PC-9 (cell line): ENCODE measurements at regions of chr1 and their contacts with region 1.

Region 1: GRCh38 chr1:92784639-92785500 is at the start of gene EVI5:
- DNase-seq: peak; percentile 94 to 95
- H3K4me3 ChIP-seq: peak within 1 kb of the TSS; percentile 94
- H3K27ac ChIP-seq: peak within 1 kb of the TSS; percentile 57
- H3K4me1 ChIP-seq: peaks cover 26% of the 10 kb centered on the region
- H3K27me3 ChIP-seq: no peaks in the 10 kb centered on the region
- CTCF ChIP-seq: no peak
- total RNA-seq, gene EVI5: 32.0 and 33.9 TPM in 2 replicates

Region 2: DNA sequence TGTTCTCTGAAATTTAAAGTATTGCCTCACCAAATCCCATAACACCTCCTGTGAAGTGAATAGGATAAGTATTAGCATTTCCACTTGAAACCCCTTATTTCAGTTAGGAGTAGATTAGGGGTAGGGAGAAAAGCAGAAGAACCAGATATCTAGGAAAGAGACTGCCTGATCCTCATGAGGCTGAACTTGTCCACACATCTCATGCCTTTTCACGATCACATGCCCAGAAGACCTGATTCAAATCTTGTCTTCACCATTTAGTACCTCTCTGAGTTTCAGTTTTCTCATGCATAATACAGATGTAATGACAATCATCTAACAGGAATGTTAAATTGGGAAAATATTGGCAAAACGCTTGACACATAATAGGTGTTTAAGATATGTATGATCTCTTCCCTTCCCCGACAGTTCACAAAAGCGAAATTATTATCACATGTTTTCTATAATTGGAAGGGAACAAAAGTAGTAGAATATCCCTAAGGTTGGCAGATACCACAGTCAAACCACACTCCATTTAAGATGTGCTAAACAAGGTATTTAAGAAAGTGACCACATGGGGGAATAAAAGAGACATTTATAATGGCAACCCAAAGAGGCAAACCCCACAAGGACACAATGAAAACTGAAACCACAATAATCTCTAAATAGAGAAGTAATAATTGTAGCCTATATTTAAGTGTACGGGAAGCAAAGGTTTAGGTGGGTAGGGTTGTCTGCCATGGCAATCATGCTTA is 323.3 kb before region 1 on chr1:
- CTCF ChIA-PET with region 1: no interaction called
- POLR2A ChIA-PET with region 1: no interaction called
- intact Hi-C with region 1: no loop called
- DNase-seq: no peak
- H3K4me3 ChIP-seq: no peak overlapping the region
- H3K27ac ChIP-seq: no peak overlapping the region
- H3K4me1 ChIP-seq: no peaks in the 10 kb centered on the region
- H3K27me3 ChIP-seq: no peaks in the 10 kb centered on the region
- CTCF ChIP-seq: peak; percentile 27; the same call in 1 of the 2 replicates

Region 3: DNA sequence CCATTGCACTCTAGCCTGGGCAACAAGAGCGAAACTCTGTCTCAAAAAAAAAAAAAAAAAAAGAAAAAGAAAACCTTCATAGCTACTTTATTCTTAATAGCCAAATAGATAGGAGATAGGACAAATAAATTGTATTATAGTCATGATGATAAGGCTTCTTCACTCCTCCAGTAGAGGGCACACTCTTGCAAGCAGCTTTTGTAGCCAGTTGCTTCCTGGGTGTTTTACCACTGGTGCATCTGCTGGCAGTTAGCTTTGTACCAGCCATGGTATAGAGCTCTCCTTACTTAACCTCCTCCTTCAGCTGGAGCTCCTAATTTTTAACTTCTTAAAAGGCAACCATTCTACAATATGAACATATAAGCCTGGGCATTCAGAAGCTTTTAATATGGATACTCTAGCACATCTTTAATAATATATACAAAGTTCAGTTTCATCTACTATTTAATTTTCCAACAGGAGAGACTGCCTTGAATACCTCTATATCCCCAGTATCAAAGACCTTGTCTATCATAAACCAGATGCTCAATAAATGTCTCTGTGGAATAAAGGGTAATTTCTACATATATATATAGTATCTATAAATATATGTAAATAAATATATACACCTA is 35.7 kb before region 1 on chr1:
- CTCF ChIA-PET with region 1: interaction called, 4 read pairs
- POLR2A ChIA-PET with region 1: interaction called, 6 read pairs
- intact Hi-C with region 1: loop called (anchors 2 kb)
- DNase-seq: peak; percentile 21 to 59
- H3K4me3 ChIP-seq: no peak overlapping the region
- H3K27ac ChIP-seq: no peak overlapping the region
- H3K4me1 ChIP-seq: peaks cover 11% of the 10 kb centered on the region
- H3K27me3 ChIP-seq: no peaks in the 10 kb centered on the region
- CTCF ChIP-seq: peak; percentile 86

Region 4: GRCh38 chr1:92804721-92805169 is 19.9 kb after region 1 on chr1:
- CTCF ChIA-PET with region 1: no interaction called
- POLR2A ChIA-PET with region 1: no interaction called
- intact Hi-C with region 1: loop called (anchors 1 kb)
- DNase-seq: peak; percentile 74 to 94
- H3K4me3 ChIP-seq: no peak overlapping the region
- H3K27ac ChIP-seq: peak overlapping the region; percentile 33
- H3K4me1 ChIP-seq: peaks cover 18% of the 10 kb centered on the region
- H3K27me3 ChIP-seq: no peaks in the 10 kb centered on the region
- CTCF ChIP-seq: no peak

Region 5: DNA sequence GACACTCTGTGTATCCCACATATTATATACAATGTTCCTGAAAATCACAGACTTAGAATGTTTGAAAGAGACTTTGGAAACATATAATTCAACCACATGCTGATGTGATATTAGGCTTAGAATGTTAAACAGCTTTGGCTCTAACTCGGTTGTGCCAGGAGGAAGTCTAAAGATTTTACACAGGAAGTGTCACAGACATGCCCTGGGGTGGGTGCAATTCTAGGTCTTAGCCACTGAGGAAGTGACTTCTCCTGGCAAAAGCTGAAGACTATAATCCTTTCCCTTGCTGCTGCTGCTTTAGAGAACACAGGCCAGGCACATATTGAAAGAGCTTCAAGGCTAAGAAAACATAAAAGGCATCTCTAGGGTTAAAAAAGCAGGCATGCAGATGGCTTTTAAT is 97.9 kb after region 1 on chr1:
- CTCF ChIA-PET with region 1: no interaction called
- POLR2A ChIA-PET with region 1: no interaction called
- intact Hi-C with region 1: no loop called
- DNase-seq: no peak
- H3K4me3 ChIP-seq: no peak overlapping the region
- H3K27ac ChIP-seq: no peak overlapping the region
- H3K4me1 ChIP-seq: 0 out of 2 replicates have a peak, but pooled peaks cover 4% of the 10 kb centered on the region
- H3K27me3 ChIP-seq: no peaks in the 10 kb centered on the region
- CTCF ChIP-seq: no peak

Region 6: GRCh38 chr1:93374334-93375106 is 589.6 kb after region 1 on chr1:
- CTCF ChIA-PET with region 1: no interaction called
- POLR2A ChIA-PET with region 1: no interaction called
- intact Hi-C with region 1: no loop called
- DNase-seq: peak in 1 of 2 experiments; percentile 19
- H3K4me3 ChIP-seq: no peak overlapping the region
- H3K27ac ChIP-seq: no peak overlapping the region
- H3K4me1 ChIP-seq: no peaks in the 10 kb centered on the region
- H3K27me3 ChIP-seq: no peaks in the 10 kb centered on the region
- CTCF ChIP-seq: no peak